ENCODE measurements at regions of chr3 and their contacts with region 1.

Region 1: DNA sequence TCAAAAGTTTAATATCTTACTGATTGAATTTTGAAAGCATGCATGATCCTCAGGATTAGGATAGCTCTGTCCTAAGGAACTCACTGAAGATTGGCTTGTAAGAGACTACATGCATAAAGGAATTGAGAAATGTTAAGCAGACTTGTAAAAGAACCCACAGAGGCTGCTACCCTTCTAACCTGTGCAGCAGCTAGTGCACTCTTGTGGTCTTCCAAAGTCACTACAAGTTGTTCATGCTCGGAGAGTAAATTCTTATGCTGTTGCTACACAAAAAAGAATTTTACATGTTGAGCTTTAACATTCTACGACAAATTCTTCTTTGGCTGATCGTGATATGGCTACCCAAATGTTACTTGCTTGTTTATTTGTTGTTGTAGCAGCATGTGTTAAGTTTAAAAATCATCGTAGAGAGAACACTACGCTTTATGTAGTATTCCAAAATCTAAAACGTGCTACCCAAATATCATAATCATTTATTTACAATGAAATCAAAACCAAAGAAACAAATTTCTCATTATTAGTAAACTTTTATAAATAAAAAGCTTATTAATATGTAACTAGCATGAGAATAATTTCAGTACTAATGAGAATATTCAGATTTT is 55.0 kb downstream of the GOLIM4 start:
- DNase-seq: no peak
- ATAC-seq: peak; percentile 68
- H3K4me3 ChIP-seq: no peak overlapping the region
- H3K27ac ChIP-seq: no peak overlapping the region
- H3K4me1 ChIP-seq: no peaks in the 10 kb centered on the region
- H3K27me3 ChIP-seq: no peaks in the 10 kb centered on the region
- CTCF ChIP-seq: peak; percentile 31 to 58 (median 51); a peak in 4 of 6 replicates
- EP300 ChIP-seq: no peak
- POLR2A ChIP-seq: no peak
- RAD21 ChIP-seq: peak; percentile 58

Region 2: GRCh38 chr3:167929968-167930367 is 110.7 kb before region 1 on chr3:
- CTCF ChIA-PET with region 1: interaction called, 11 read pairs
- POLR2A ChIA-PET with region 1: no interaction called
- RAD21 ChIA-PET with region 1: no interaction called
- SMC1A ChIA-PET with region 1: interaction called, 3 read pairs
- in situ Hi-C with region 1: no loop called
- intact Hi-C with region 1: no loop called
- DNase-seq: no peak
- ATAC-seq: 0 out of 3 replicates have a peak, but pooled peaks have one; percentile 29
- H3K4me3 ChIP-seq: no peak overlapping the region
- H3K27ac ChIP-seq: no peak overlapping the region
- H3K4me1 ChIP-seq: no peaks in the 10 kb centered on the region
- H3K27me3 ChIP-seq: no peaks in the 10 kb centered on the region; a peak in 1 of 4 replicates
- CTCF ChIP-seq: no peak
- EP300 ChIP-seq: no peak
- POLR2A ChIP-seq: no peak
- RAD21 ChIP-seq: no peak